WTC11 (cell line): ENCODE measurements at regions of chr3 and their contacts with region 1.

Region 1: GRCh38 chr3:183895296-183895695 is 10.6 kb upstream of the PARL start:
- DNase-seq: no peak
- ATAC-seq: peak; percentile 70
- H3K4me3 Mint-ChIP-seq: no peak overlapping the region
- H3K27ac Mint-ChIP-seq: no peak overlapping the region
- H3K4me1 Mint-ChIP-seq: peaks cover 9% of the 10 kb centered on the region
- H3K27me3 Mint-ChIP-seq: peaks cover 2% of the 10 kb centered on the region
- CTCF ChIP-seq: peak; percentile 69

Region 2: GRCh38 chr3:183884427-183885296 is 10.6 kb before region 1 on chr3 and contains the start of gene PARL:
- CTCF ChIA-PET with region 1: interaction called, 19 read pairs
- POLR2A ChIA-PET with region 1: no interaction called
- DNase-seq: peak; percentile 97
- ATAC-seq: peak; percentile 98
- H3K4me3 Mint-ChIP-seq: peak within 1 kb of the TSS; percentile 95
- H3K27ac Mint-ChIP-seq: peak within 1 kb of the TSS; percentile 63
- H3K4me1 Mint-ChIP-seq: peaks cover 19% of the 10 kb centered on the region
- H3K27me3 Mint-ChIP-seq: peaks cover 2% of the 10 kb centered on the region
- CTCF ChIP-seq: peak; percentile 90
- total RNA-seq, gene PARL: 71.3 to 93.5 TPM (median 74.3 TPM) in 3 replicates

Region 3: GRCh38 chr3:183917776-183918175 is 22.5 kb after region 1 on chr3:
- CTCF ChIA-PET with region 1: interaction called, 10 read pairs
- POLR2A ChIA-PET with region 1: no interaction called
- DNase-seq: no peak
- ATAC-seq: no peak
- H3K4me3 Mint-ChIP-seq: no peak overlapping the region
- H3K27ac Mint-ChIP-seq: no peak overlapping the region
- H3K4me1 Mint-ChIP-seq: peaks cover 5% of the 10 kb centered on the region; the same call in 1 of the 2 replicates
- H3K27me3 Mint-ChIP-seq: no peaks in the 10 kb centered on the region
- CTCF ChIP-seq: no peak

Region 4: GRCh38 chr3:183954875-183955274 is 59.6 kb after region 1 on chr3:
- CTCF ChIA-PET with region 1: interaction called, 11 read pairs
- POLR2A ChIA-PET with region 1: no interaction called
- DNase-seq: peak; percentile 29
- ATAC-seq: peak; percentile 93
- H3K4me3 Mint-ChIP-seq: no peak overlapping the region
- H3K27ac Mint-ChIP-seq: peak overlapping the region; percentile 96
- H3K4me1 Mint-ChIP-seq: peaks cover 41% of the 10 kb centered on the region
- H3K27me3 Mint-ChIP-seq: no peaks in the 10 kb centered on the region
- CTCF ChIP-seq: no peak

Region 5: DNA sequence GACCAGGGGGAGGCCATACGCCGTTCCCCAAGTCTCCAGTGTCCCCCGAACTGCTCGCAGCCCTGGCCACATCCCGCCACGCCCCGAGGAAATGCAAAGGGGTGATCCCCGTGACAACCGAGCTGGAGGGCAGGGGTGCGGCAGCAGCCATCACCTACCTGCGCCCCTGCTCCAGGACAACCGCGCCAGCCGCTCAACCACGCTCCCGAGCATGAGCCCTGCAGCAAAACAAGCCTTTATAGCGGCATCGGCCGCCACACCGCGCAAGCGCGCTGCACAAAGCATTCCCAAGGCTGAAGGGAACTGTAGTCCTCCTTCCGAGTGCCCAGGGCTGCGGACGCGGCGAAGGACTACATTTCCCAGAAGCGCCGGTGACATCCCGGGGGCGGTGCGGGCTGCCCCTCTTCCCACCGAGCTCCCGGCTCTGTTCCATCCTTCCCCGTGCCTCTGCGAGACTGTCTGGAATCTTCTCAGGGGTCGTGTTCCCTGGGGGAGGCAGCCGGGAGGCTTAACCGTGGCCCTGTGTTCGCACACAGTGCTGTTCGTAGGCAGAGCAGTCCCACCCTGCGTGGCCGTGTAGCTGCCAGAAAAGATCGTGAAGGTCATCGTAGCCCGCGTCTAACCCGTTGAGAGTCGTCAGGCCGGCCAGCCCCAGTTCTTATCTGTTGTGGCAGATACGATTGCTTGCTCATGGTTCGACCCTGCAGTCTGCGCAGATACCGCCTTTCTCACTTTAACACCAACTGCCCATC is 122.6 kb after region 1 on chr3 and contains the start of gene ABCC5:
- CTCF ChIA-PET with region 1: interaction called, 37 read pairs
- POLR2A ChIA-PET with region 1: interaction called, 3 read pairs
- DNase-seq: peak; percentile 94
- ATAC-seq: peak; percentile 98
- H3K4me3 Mint-ChIP-seq: peak within 1 kb of the TSS; percentile 99
- H3K27ac Mint-ChIP-seq: peak within 1 kb of the TSS; percentile 96
- H3K4me1 Mint-ChIP-seq: peaks cover 22% of the 10 kb centered on the region
- H3K27me3 Mint-ChIP-seq: no peaks in the 10 kb centered on the region
- CTCF ChIP-seq: peak; percentile 14
- total RNA-seq, gene ABCC5: 29.1 to 35.2 TPM (median 31.1 TPM) in 3 replicates

Region 6: GRCh38 chr3:184135149-184135910 is 240.0 kb after region 1 on chr3 and contains the start of gene EIF2B5:
- CTCF ChIA-PET with region 1: interaction called, 12 read pairs
- POLR2A ChIA-PET with region 1: no interaction called
- DNase-seq: peak; percentile 89
- ATAC-seq: peak; percentile 81
- H3K4me3 Mint-ChIP-seq: peak within 1 kb of the TSS; percentile 94
- H3K27ac Mint-ChIP-seq: peak within 1 kb of the TSS; percentile 89
- H3K4me1 Mint-ChIP-seq: peaks cover 20% of the 10 kb centered on the region
- H3K27me3 Mint-ChIP-seq: no peaks in the 10 kb centered on the region
- CTCF ChIP-seq: no peak
- total RNA-seq, gene EIF2B5: 36.6 to 42.3 TPM (median 38.0 TPM) in 3 replicates